Activated CD4-positive, alpha-beta T cell treated with anti-CD3 and anti-CD28 coated beads for 36 hours (primary cell): ENCODE measurements at regions of chr1 and their contacts with region 1.

Region 1: DNA sequence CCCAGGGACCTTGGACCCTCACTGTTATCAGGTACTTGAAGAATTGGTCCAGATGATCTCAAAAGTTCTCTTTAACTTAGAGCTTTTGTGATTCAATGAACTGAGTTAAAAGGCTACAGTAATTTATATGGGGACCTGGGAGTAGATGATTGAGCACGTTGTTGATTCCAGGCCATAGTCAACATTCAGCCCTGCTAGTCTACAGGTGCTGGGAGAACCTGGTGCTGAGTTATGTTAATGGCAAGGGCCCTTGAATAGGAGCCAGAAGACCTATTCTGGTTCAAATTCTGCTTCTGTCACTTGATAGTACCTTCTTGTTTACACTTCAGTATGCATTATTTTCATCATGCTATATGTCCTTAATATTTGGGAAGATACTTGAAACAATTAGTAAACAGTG is 11.2 kb downstream of the DYRK3 start:
- DNase-seq: no peak
- ATAC-seq: no peak
- H3K4me3 Mint-ChIP-seq: no peak overlapping the region
- H3K27ac Mint-ChIP-seq: no peak overlapping the region
- H3K4me1 Mint-ChIP-seq: no peaks in the 10 kb centered on the region
- H3K27me3 Mint-ChIP-seq: no peaks in the 10 kb centered on the region

Region 2: DNA sequence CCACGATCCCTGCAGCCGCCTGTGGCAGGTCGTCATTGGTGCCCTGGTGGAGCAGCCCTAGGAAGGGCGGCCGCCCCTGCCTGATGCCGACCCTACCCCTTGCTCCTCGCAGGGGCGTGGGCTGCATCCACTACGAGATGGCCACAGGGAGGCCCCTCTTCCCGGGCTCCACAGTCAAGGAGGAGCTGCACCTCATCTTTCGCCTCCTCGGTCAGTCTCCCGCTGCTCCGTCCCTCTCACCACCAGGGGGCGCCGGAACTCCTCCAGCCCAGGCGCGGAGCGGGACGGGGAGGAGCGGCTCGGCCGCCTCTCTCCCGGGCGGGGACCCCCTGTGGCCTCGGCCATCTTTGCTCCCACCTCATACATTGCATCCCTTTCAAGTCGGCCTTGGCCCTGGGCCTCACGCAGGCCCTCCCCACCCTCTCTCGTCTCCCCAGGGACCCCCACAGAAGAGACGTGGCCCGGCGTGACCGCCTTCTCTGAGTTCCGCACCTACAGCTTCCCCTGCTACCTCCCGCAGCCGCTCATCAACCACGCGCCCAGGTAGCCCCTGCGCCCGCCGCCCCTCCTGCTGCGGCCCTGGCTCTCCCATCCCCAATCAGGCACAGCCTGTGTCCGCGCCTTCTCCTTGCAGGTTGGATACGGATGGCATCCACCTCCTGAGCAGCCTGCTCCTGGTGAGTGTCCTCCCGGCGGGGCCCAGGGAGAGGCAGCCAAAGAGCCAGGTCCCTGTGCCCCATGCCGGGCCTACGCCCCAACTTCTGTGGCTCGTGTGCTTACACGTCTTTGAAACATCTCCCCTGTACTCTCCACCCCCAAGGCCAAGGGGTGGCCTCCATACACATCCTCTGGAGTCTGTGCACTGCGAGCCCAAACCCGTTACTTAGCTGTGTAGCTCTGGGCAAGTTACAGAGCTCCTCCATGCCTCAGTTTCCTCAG is 1117.3 kb before region 1 on chr1:
- CTCF ChIA-PET with region 1: no interaction called
- POLR2A ChIA-PET with region 1: no interaction called
- intact Hi-C with region 1: no loop called
- DNase-seq: peak; percentile 91
- ATAC-seq: peak; percentile 90
- H3K4me3 Mint-ChIP-seq: no peak overlapping the region
- H3K27ac Mint-ChIP-seq: no peak overlapping the region
- H3K4me1 Mint-ChIP-seq: no peaks in the 10 kb centered on the region
- H3K27me3 Mint-ChIP-seq: no peaks in the 10 kb centered on the region

Region 3: GRCh38 chr1:206540044-206540780 is 106.3 kb before region 1 on chr1:
- CTCF ChIA-PET with region 1: no interaction called
- POLR2A ChIA-PET with region 1: no interaction called
- intact Hi-C with region 1: no loop called
- DNase-seq: no peak
- ATAC-seq: no peak
- H3K4me3 Mint-ChIP-seq: no peak overlapping the region
- H3K27ac Mint-ChIP-seq: no peak overlapping the region
- H3K4me1 Mint-ChIP-seq: peaks cover 18% of the 10 kb centered on the region
- H3K27me3 Mint-ChIP-seq: no peaks in the 10 kb centered on the region

Region 4: DNA sequence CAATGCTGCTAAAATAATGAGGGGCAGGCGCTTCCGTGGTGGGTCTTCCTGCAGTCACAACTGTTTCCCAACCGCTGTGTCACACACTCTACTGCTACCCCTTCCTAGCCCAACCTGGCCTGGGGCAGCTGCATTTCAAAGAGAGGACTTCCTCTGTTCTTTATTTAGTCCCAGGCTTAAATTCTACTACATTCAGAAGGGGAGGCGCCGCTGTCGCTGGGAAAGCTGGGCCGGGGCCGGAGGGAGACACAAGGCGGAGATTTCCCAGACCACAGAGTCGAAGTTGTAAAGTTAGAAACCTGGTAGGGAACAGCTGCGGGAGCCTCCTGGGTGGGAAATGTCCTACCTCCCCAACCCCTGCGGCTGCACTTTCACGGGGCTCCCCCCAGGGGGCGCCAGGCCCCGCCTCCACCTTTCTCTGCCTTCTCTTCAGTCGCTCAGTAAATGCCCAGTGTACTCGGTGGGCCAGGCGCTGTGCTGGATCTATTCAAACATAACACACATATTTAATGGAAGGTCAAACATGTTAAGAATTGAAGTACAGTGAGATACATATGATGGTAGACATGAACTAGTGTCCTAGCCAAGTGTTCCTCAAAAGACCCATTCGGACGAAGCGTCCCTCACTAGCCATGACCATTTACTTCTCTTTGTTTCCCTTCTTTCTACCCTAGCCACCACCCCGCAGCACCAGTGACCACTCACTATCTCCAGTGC is 11.9 kb after region 1 on chr1:
- CTCF ChIA-PET with region 1: interaction called, 176 read pairs
- POLR2A ChIA-PET with region 1: no interaction called
- intact Hi-C with region 1: no loop called
- DNase-seq: peak; percentile 72
- ATAC-seq: peak; percentile 49
- H3K4me3 Mint-ChIP-seq: no peak overlapping the region
- H3K27ac Mint-ChIP-seq: no peak overlapping the region
- H3K4me1 Mint-ChIP-seq: peaks cover 21% of the 10 kb centered on the region
- H3K27me3 Mint-ChIP-seq: peaks cover 23% of the 10 kb centered on the region